ENCODE measurements at regions of chr9 and their contacts with region 1.

Region 1: DNA sequence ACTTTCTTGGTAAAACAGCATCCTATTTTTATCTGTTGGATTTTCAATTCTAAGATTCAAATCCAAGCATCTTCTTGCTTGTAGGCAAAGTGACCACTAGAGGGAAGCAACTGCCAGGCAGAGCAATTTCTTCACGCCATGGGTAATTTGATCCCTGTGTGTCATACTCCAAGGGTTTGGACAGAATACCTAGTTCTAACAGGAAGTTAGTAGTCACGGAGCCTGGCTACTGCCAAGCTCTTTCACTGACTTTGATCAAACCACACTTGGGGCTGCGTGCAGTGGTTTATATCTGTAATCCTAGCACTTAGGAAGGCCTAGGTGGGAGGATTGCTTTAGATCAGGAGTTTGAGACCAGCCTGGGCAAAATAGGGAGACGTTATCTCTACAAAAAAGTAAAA is 473.6 kb upstream of the TNC start:
- DNase-seq: peak; percentile 16 to 91
- H3K4me3 ChIP-seq: no peak overlapping the region
- H3K27ac ChIP-seq: peak overlapping the region; percentile 51 to 55
- H3K4me1 ChIP-seq: peaks cover 0 to 16% of the 10 kb centered on the region in 2 donors
- H3K27me3 ChIP-seq: no peaks in the 10 kb centered on the region
- CTCF ChIP-seq: peak; percentile 65 to 87 (median 81)

Region 2: GRCh38 chr9:115540091-115540490 is 51.5 kb before region 1 on chr9:
- intact Hi-C with region 1: no loop called
- DNase-seq: no peak
- H3K4me3 ChIP-seq: no peak overlapping the region
- H3K27ac ChIP-seq: no peak overlapping the region
- H3K4me1 ChIP-seq: no peaks in the 10 kb centered on the region
- H3K27me3 ChIP-seq: no peaks in the 10 kb centered on the region
- CTCF ChIP-seq: no peak

Region 3: GRCh38 chr9:115694014-115694413 is 102.4 kb after region 1 on chr9:
- intact Hi-C with region 1: loop called (anchors 1 kb)
- DNase-seq: no peak
- H3K4me3 ChIP-seq: no peak overlapping the region
- H3K27ac ChIP-seq: no peak overlapping the region
- H3K4me1 ChIP-seq: peaks cover 0 to 6% of the 10 kb centered on the region in 2 donors
- H3K27me3 ChIP-seq: no peaks in the 10 kb centered on the region
- CTCF ChIP-seq: peak; percentile 36 to 52 (median 36)

Region 4: DNA sequence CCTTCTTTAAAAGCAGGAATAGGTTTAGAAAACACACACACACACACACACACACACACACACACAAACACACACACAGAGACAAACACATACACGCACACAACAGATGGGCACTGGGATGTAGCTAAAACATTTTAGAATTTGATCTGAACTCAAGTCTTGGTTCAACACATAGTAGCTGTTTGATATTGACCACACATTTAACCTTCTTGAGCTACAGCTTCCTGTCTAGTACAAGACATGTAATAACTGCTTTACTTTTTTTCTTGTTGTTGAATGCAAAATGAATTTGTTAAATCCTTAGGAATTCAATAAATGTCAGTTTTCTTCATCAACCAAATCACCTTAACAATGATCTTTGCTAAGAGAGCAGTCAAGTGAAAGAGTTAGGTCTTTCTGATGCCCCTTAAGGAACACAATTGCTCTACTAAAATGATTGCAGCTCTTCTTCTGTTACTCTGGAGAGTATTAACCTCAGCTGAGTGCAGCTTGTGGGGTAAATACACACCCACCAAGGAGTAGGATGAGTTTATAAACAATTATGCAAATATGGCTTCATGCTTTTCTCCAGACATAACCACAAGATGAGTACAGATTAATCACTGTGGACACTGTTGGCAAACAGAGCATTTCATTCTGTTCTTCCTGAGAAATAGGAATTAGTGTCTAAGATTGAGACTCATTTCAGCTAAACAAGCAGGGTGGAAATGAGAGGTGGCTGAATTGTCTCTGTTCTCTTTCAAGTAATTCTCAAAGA is 259.1 kb after region 1 on chr9:
- intact Hi-C with region 1: loop called (anchors 10 kb)
- DNase-seq: no peak
- H3K4me3 ChIP-seq: no peak overlapping the region
- H3K27ac ChIP-seq: no peak overlapping the region
- H3K4me1 ChIP-seq: no peaks in the 10 kb centered on the region
- H3K27me3 ChIP-seq: no peaks in the 10 kb centered on the region
- CTCF ChIP-seq: no peak

Region 5: DNA sequence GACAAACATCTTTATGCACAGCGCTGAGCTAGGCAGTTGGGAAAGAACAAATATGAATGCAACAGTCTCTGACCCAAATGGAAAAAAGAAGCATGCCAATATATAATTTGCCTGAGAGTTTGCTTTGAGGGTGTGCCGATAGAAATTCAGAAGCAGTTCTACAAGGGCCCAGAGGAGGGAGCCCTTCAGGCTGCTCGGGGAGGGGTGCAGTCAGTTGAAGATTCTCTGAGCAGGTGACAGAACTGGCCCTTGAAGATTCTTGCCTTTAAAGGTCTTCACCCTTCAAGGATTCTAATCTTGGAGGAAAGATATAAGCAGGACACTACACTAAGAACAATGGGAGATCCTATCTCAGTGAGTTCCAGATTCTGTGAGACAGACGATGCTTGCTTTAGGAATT is 558.3 kb after region 1 on chr9:
- intact Hi-C with region 1: loop called (anchors 1 kb)
- DNase-seq: no peak
- H3K4me3 ChIP-seq: no peak overlapping the region
- H3K27ac ChIP-seq: no peak overlapping the region
- H3K4me1 ChIP-seq: no peaks in the 10 kb centered on the region
- H3K27me3 ChIP-seq: no peaks in the 10 kb centered on the region
- CTCF ChIP-seq: peak; percentile 28 to 58 (median 43)

Region 6: DNA sequence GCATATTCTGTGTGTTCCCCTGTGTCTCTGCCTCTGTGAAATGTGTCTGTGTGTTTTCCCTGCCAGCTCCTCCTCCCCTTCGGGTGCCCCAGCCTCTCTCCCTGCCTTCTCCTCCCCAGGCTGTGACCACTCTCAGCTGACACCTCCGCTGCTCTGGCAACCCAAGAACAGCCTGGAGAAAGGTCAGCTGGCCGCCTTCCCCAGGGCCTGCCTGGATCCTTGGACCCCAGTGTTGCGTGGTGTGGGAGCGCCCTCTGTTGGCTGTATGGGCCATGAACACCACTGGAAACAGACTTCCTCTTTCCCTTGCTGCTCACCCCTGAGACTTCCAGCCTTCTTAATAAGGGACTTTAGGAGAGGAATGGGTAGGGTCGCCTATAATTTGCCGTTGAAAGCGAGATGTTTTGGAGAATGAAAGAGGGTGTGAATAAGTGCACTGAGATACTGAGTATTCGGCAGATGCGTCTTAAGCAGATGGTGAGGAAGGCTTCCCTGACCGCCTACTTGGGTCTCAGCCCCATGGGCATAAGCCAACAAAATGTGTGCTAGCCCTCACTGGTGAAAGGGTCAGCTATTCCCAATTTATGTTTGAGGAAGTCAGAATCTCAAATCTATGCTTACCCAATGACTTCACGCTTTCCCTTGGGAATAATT is 980.6 kb after region 1 on chr9:
- intact Hi-C with region 1: loop called (anchors 1 kb)
- DNase-seq: peak in 1 of 2 donors; percentile 87
- H3K4me3 ChIP-seq: no peak overlapping the region
- H3K27ac ChIP-seq: no peak overlapping the region
- H3K4me1 ChIP-seq: no peaks in the 10 kb centered on the region
- H3K27me3 ChIP-seq: no peaks in the 10 kb centered on the region
- CTCF ChIP-seq: peak; percentile 72 to 93 (median 73)